ENCODE measurements at regions of chr11 and their contacts with region 1.

Region 1: GRCh38 chr11:134331354-134332188 is at the start of gene GLB1L2:
- DNase-seq: peak; percentile 45
- ATAC-seq: peak; percentile 90
- H3K4me3 ChIP-seq: peak within 1 kb of the TSS; percentile 67 to 71
- H3K27ac ChIP-seq: peak within 1 kb of the TSS; percentile 14; the same call in 1 of the 2 replicates
- H3K4me1 ChIP-seq: peaks cover 17 to 38% of the 10 kb centered on the region in 2 experiments; a peak in 3 of 4 replicates
- H3K27me3 ChIP-seq: no peaks in the 10 kb centered on the region
- CTCF ChIP-seq: no peak
- POLR2A ChIP-seq: no peak
- RAD21 ChIP-seq: no peak
- total RNA-seq, gene GLB1L2: 27.1 TPM

Region 2: GRCh38 chr11:134346101-134346975 is 14.8 kb after region 1 on chr11:
- CTCF ChIA-PET with region 1: no interaction called
- POLR2A ChIA-PET with region 1: no interaction called
- RAD21 ChIA-PET with region 1: no interaction called
- intact Hi-C with region 1: no loop called
- DNase-seq: no peak
- ATAC-seq: no peak
- H3K4me3 ChIP-seq: no peak overlapping the region
- H3K27ac ChIP-seq: no peak overlapping the region
- H3K4me1 ChIP-seq: peaks cover 0 to 10% of the 10 kb centered on the region in 2 experiments; a peak in 2 of 4 replicates
- H3K27me3 ChIP-seq: no peaks in the 10 kb centered on the region
- CTCF ChIP-seq: no peak
- POLR2A ChIP-seq: no peak
- RAD21 ChIP-seq: no peak

Region 3: DNA sequence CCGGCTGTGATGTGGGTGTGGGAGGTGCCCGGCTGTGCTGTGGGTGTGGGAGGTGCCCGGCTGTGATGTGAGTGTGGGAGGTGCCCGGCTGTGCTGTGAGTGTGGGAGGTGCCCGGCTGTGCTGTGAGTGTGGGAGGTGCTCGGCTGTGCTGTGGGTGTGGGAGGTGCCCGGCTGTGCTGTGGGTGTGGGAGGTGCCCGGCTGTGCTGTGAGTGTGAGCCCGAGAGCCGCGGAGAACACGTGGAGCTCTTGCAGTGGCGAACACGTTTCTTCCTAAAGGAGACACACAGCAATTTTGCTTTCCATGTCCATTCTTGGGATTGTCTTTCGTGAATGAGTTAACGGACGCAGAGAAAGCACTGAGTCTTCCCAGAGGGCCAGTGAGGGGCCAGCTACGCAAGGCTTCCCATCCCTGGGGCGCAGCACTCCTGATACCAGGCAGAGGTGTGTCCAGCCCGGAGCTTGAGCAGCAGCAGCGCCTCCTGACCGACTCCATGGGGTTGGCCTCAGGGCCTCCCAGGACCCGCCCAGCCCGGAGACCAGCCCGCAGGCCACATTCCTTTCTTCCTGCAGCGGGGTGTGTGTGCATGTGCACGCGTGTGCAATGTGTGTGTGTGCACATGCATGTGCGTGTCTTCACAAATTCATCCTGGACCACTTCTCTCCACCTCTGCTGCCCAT is 325.4 kb after region 1 on chr11:
- CTCF ChIA-PET with region 1: no interaction called
- POLR2A ChIA-PET with region 1: no interaction called
- RAD21 ChIA-PET with region 1: no interaction called
- intact Hi-C with region 1: loop called (anchors 10 kb)
- DNase-seq: no peak
- ATAC-seq: peak; percentile 86
- H3K4me3 ChIP-seq: peak overlapping the region; percentile 36 to 42
- H3K27ac ChIP-seq: peak overlapping the region; percentile 49; the same call in 1 of the 2 replicates
- H3K4me1 ChIP-seq: peaks cover 13 to 15% of the 10 kb centered on the region in 2 experiments; a peak in 3 of 4 replicates
- H3K27me3 ChIP-seq: peaks cover 19% of the 10 kb centered on the region; the same call in 1 of the 2 replicates
- CTCF ChIP-seq: no peak
- POLR2A ChIP-seq: no peak
- RAD21 ChIP-seq: no peak